GM12878 (cell line): ENCODE measurements at regions of chr18 and their contacts with region 1.

Region 1: DNA sequence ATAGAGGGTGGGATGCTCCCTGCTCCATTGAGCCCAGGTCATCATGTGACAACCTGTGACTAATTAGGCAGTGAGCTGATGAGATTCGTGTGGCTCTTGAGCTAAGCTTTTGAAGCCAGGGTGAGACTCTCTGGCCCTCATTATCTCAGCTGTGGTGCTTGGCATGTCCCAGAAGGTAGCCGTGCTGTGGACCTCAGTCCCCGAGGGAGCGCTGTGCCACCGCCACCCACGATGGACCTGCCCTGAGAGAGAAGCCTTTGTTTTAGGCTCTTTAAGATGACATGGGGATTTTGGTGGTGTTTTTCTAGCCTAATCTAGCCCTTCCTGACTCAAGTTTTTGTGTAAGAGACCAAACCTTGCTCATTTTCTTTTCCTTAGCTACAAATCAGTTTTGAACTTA is 66.4 kb downstream of the NEDD4L start:
- DNase-seq: peak; percentile 61
- ATAC-seq: peak; percentile 85
- H3K4me3 ChIP-seq: no peak overlapping the region
- H3K27ac ChIP-seq: peak overlapping the region; percentile 9; the same call in 1 of the 2 replicates
- H3K4me1 ChIP-seq: peaks cover 12% of the 10 kb centered on the region
- H3K27me3 ChIP-seq: no peaks in the 10 kb centered on the region
- CTCF ChIP-seq: no peak
- EP300 ChIP-seq: 0 out of 4 replicates have a peak, but pooled peaks of 1 of the 2 experiments have one; percentile 11
- POLR2A ChIP-seq: no peak
- RAD21 ChIP-seq: no peak

Region 2: DNA sequence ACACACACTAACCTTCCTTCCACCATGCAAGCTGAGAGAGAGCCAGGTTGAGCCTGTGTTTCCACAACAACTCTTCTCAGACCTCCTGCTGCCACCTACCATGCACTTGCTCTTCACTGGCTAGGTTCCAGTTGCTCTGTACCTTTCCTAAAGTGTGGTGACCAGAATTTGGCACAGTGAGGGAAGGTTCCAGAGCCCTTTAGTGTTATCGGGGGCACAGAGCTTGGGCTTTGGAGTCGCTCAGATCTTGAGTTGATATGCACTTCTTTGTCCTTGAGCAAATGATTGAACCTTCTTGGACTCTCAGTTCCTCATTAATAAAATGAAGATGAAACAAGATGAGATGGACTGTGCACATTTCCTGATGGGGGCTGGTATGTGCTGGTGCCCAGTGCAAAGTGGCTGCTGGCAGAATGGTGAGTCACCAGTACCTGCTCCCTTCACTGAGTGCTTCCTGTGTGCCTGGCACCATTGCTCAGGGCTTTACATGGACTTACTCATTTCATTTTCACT is 19.2 kb before region 1 on chr18:
- CTCF ChIA-PET with region 1: interaction called, 14 read pairs
- POLR2A ChIA-PET with region 1: interaction called, 19 read pairs
- RAD21 ChIA-PET with region 1: interaction called, 13 read pairs
- SMC1A ChIA-PET with region 1: interaction called, 78 read pairs
- in situ Hi-C with region 1: no loop called
- intact Hi-C with region 1: no loop called
- DNase-seq: peak; percentile 72
- ATAC-seq: peak; percentile 97
- H3K4me3 ChIP-seq: no peak overlapping the region
- H3K27ac ChIP-seq: peak overlapping the region; percentile 52
- H3K4me1 ChIP-seq: peaks cover 14% of the 10 kb centered on the region
- H3K27me3 ChIP-seq: no peaks in the 10 kb centered on the region
- CTCF ChIP-seq: no peak
- EP300 ChIP-seq: no peak
- POLR2A ChIP-seq: no peak
- RAD21 ChIP-seq: no peak

Region 3: DNA sequence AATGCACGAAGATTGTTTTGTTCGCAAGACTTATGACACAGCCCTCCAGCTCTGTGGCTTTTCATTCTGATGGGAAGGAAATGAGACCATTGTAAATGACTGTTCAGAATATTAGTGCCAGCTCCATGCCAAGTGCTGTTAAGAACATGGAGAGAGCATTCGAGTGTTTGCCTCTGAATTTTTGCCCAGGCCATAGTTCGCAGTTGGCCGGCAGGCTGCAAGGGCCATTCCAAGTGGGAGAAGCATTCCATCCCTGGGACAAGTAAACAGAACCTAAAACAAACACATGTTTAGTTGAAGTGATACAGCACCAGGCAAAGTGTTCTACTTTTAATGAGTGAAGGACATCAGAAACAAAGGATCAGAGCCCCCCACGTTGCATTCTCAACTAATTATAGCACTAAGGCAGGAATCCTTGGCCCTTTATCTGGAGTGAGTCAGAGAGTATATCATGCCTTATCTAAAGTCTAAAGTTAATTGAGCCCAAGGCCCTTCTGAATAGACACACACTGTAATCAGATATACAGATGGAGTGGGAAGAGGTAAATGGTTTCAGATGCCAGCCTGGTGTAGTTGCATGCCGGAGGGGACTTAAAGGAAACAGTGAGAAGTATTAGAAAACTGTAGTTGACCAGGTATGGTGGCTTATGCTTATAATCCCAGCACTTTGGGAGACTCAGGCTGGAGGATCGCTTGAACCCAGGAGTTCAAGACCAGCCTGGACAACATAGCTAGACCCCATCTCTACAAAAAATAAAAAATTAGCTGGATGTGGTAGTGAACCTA is 13.1 kb before region 1 on chr18:
- CTCF ChIA-PET with region 1: interaction called, 21 read pairs
- POLR2A ChIA-PET with region 1: interaction called, 46 read pairs
- RAD21 ChIA-PET with region 1: interaction called, 53 read pairs
- SMC1A ChIA-PET with region 1: interaction called, 78 read pairs
- in situ Hi-C with region 1: no loop called
- intact Hi-C with region 1: loop called (anchors 1 kb)
- DNase-seq: no peak
- ATAC-seq: no peak
- H3K4me3 ChIP-seq: no peak overlapping the region
- H3K27ac ChIP-seq: no peak overlapping the region
- H3K4me1 ChIP-seq: peaks cover 11% of the 10 kb centered on the region
- H3K27me3 ChIP-seq: no peaks in the 10 kb centered on the region
- CTCF ChIP-seq: no peak
- EP300 ChIP-seq: no peak
- POLR2A ChIP-seq: no peak
- RAD21 ChIP-seq: no peak

Region 4: DNA sequence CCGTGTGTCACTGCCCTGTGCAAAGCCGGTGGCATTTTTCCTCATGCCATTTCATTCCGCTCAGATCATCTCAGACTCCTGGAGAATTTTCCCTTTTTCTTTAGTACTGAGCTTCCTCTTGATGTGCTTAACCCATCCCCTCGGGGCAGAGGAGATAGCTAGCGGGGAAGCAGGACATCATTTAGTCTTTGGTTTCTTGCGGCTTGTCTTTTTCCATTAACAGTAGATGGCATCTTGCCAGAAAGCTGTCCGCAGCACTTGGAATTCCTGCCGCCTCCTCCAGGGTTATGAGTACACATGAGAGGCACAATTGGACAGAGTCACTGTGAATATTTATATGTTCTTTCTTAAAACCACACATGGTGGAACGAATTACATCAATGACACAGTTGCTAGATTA is 291.8 kb after region 1 on chr18:
- CTCF ChIA-PET with region 1: no interaction called
- POLR2A ChIA-PET with region 1: no interaction called
- RAD21 ChIA-PET with region 1: no interaction called
- SMC1A ChIA-PET with region 1: no interaction called
- in situ Hi-C with region 1: no loop called
- intact Hi-C with region 1: no loop called
- DNase-seq: no peak
- ATAC-seq: no peak
- H3K4me3 ChIP-seq: no peak overlapping the region
- H3K27ac ChIP-seq: no peak overlapping the region
- H3K4me1 ChIP-seq: peaks cover 11% of the 10 kb centered on the region; the same call in 1 of the 2 replicates
- H3K27me3 ChIP-seq: no peaks in the 10 kb centered on the region
- CTCF ChIP-seq: no peak
- EP300 ChIP-seq: no peak
- POLR2A ChIP-seq: no peak
- RAD21 ChIP-seq: no peak